Activated B cell treated with CpG ODN at 0.5 μM for 24 hours (primary cell): ENCODE measurements at regions of chr6 and their contacts with region 1.

Region 1: DNA sequence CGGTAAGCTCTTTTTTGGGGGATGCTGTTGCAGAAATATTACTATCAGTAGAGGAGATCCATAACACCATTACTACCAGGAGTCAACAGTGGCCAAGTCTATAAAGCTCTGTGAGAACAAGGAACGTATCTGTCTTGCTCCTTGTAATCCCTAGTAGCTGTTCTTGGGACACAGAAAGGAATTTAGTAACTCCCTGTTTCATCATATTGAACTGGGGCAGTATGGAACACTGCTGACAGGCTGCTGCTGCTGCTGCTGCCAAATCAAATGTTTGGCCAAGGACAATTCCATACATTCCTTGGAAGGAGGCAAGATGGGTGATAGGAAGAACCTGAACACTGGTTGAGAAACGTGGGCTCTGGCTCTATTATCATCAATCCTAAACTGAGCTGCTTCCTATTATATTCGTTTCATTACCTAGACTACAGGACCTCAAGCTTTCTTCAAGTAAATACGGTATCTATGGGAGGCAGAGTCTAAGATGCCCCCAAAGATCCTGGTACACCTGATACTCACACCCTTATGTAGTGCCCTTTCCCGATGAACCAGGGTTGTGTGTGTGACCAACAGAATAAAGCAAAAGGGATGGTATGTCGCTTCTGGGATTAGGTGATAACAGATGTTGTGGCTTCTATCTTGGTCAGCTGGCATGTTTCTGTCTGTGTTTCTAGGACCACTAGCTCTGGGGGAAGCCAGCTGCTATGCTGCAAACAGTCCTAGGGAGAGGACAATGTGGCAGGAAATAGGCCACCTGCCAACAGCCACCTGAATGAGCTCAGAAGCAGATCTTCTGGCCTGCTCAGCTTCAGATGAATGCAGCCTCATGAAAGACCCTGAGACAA is 39.5 kb downstream of the ELOVL5 start:
- DNase-seq: no peak
- ATAC-seq: peak; percentile 34
- H3K4me3 Mint-ChIP-seq: peak overlapping the region; percentile 57
- H3K27ac Mint-ChIP-seq: peak overlapping the region; percentile 92
- H3K4me1 Mint-ChIP-seq: peaks cover 84% of the 10 kb centered on the region
- H3K27me3 Mint-ChIP-seq: no peaks in the 10 kb centered on the region
- CTCF ChIP-seq: no peak

Region 2: DNA sequence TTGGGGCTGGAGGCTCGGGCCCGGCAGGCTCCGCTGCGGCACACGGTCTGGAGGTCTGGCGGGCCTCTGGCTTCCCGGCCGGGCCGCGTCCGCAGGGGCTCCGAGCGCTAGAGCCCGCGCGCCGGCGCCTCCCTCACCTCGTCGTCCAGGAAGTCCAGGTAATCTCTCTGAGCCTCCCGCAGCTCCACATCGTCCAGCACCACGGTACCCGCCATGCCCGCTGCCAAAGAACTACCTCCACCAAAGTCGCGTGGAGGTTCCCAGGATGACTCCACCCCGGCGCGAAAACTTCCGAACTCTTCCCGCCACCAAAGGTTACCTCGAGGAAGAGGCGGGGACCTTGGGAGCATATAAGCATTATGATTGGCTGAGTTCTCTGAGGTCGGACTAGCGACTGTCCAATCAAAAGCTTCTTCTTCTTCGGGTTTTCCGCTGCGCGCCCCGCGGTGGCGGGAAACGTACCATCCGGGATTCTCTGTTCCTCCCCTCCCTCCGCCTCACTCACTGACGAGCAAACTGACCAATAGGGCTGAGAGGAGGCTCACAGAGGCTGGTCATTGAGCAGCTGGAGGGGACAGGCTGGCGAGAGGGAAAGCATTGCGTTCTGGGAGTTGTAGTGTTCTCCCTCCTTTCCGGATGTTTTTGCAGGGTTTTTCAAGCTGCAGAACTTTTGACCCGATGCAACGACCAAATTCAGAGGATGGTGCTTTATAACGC is 1024.7 kb before region 1 on chr6 and contains the start of gene MCM3:
- CTCF ChIA-PET with region 1: no interaction called
- POLR2A ChIA-PET with region 1: no interaction called
- intact Hi-C with region 1: no loop called
- DNase-seq: peak; percentile 83
- ATAC-seq: peak; percentile 98
- H3K4me3 Mint-ChIP-seq: peak within 1 kb of the TSS; percentile 58
- H3K27ac Mint-ChIP-seq: no peak within 1 kb of the TSS
- H3K4me1 Mint-ChIP-seq: peaks cover 20% of the 10 kb centered on the region
- H3K27me3 Mint-ChIP-seq: no peaks in the 10 kb centered on the region
- CTCF ChIP-seq: no peak
- total RNA-seq, gene MCM3: 73.2 and 78.9 TPM in 2 replicates

Region 3: GRCh38 chr6:53335208-53335994 is 26.1 kb after region 1 on chr6:
- CTCF ChIA-PET with region 1: interaction called, 3 read pairs
- POLR2A ChIA-PET with region 1: interaction called, 8 read pairs
- intact Hi-C with region 1: loop called (anchors 2 kb)
- DNase-seq: peak; percentile 56
- ATAC-seq: peak; percentile 85
- H3K4me3 Mint-ChIP-seq: peak overlapping the region; percentile 84
- H3K27ac Mint-ChIP-seq: peak overlapping the region; percentile 97
- H3K4me1 Mint-ChIP-seq: peaks cover 93% of the 10 kb centered on the region
- H3K27me3 Mint-ChIP-seq: no peaks in the 10 kb centered on the region
- CTCF ChIP-seq: no peak

Region 4: GRCh38 chr6:53417140-53417539 is 107.9 kb after region 1 on chr6:
- CTCF ChIA-PET with region 1: no interaction called
- POLR2A ChIA-PET with region 1: no interaction called
- intact Hi-C with region 1: no loop called
- DNase-seq: no peak
- ATAC-seq: no peak
- H3K4me3 Mint-ChIP-seq: no peak overlapping the region
- H3K27ac Mint-ChIP-seq: no peak overlapping the region
- H3K4me1 Mint-ChIP-seq: peaks cover 4% of the 10 kb centered on the region
- H3K27me3 Mint-ChIP-seq: no peaks in the 10 kb centered on the region
- CTCF ChIP-seq: no peak